ENCODE measurements at regions of chr17 and their contacts with region 1.

Region 1: DNA sequence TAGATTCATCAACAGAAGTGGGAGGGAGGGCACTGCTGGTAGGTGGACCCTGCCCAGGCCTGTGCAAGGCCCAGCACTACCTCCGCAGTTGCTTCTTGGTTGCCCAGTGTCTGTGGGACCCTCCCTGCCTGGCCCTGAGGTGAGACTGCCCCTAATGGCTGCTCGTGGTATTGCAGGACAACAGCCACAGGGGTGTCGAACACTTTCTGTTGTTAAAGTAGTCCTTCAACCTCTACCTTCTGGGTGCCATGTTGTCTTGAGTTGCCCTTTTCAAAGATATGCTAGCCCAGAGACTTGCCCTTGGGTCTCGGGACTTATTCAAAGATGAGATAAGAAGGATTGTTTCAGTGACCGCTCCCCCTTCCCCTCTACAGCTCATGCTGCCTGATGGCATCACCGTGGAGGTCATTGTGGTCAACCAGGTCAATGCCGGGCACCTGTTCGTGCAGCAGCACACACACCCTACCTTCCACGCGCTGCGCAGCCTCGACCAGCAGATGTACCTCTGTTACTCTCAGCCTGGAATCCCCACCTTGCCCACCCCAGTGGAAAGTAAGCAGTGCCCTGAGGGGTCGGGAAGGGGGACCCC is 29.1 kb downstream of the AKAP1 start:
- DNase-seq: peak; percentile 69 to 77
- H3K4me3 ChIP-seq: no peak overlapping the region
- H3K4me3 Mint-ChIP-seq: no peak overlapping the region
- H3K27ac Mint-ChIP-seq: no peak overlapping the region
- H3K4me1 ChIP-seq: no peaks in the 10 kb centered on the region
- H3K4me1 Mint-ChIP-seq: no peaks in the 10 kb centered on the region
- H3K27me3 ChIP-seq: no peaks in the 10 kb centered on the region
- H3K27me3 Mint-ChIP-seq: no peaks in the 10 kb centered on the region
- CTCF ChIP-seq: peak; percentile 82 to 94

Region 2: DNA sequence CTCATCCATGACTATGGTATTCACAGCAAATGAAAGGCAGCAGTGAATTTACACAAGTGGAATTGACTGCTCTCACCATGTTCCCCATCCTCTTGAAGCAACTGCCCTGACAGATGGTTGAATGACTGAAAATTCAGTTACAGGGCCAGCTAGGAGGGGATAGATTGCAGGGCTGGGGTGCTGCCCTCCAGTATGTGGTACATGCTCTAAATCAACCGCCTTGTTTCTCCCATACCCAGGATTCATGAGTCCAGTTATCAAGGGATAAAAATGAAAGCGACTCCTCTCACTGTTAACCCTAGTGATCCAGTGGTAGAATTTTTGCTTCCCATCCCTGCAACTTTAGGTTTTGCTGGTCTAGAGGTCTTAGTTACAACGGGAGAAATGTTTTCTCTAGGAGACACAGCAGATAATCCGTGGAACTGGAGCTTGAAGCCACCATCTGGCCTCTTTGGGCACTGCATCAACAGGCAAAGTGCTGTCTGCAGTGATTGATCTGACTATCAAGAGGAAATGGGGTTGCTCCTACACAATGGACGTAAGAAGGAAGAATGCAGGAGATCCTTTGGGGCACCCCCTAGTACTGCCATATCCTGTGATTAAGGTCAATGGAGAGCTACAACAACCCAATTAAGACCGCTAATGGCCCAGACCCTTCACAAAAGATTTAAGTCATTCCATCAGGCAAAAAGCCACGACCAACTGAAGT is 104.3 kb before region 1 on chr17:
- CTCF ChIA-PET with region 1: no interaction called
- POLR2A ChIA-PET with region 1: no interaction called
- intact Hi-C with region 1: loop called (anchors 10 kb)
- DNase-seq: peak; percentile 65 to 69
- H3K4me3 ChIP-seq: no peak overlapping the region
- H3K4me3 Mint-ChIP-seq: no peak overlapping the region
- H3K27ac Mint-ChIP-seq: no peak overlapping the region
- H3K4me1 ChIP-seq: no peaks in the 10 kb centered on the region
- H3K4me1 Mint-ChIP-seq: peaks cover 7% of the 10 kb centered on the region
- H3K27me3 ChIP-seq: no peaks in the 10 kb centered on the region
- H3K27me3 Mint-ChIP-seq: no peaks in the 10 kb centered on the region
- CTCF ChIP-seq: peak; percentile 77 to 86

Region 3: DNA sequence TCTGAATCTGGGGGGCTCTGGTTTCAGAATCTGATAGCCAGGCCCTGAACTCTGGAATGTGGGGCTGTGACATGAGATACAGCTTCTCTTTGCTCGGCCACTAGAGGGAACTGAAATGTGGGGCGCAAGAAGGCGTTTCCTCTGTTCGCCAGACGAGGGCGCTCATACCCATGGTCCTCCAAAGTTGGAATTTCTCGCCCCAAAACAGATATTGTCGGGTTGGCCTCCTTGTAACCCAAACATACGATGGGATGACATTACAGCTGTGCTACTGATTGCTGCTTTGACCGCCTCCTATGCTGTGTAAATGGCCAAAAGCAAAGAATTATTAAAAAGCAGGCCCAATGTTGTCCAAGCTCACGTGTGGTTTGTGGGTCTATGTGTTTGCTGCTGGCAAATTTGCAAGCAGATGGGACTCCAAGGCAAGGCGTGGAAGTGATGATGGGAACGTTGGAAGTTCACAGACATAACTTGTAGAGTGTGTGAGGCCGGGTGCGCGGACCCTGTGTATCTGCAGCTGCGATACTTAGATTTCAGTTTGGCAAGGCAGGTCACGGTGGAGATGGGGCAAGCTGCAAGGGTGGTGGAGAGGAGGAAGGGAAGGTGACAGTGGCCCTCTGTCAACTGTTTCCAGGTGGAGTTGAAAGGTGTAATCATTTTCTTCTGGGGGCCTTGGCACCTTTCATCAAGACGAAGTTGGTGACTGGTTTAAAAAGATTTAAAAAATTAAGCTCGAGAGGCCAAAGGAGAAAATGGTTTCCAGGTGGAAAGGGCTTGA is 129.2 kb after region 1 on chr17:
- CTCF ChIA-PET with region 1: no interaction called
- POLR2A ChIA-PET with region 1: no interaction called
- intact Hi-C with region 1: no loop called
- DNase-seq: peak; percentile 65 to 79
- H3K4me3 ChIP-seq: no peak overlapping the region
- H3K4me3 Mint-ChIP-seq: no peak overlapping the region
- H3K27ac Mint-ChIP-seq: no peak overlapping the region
- H3K4me1 ChIP-seq: no peaks in the 10 kb centered on the region
- H3K4me1 Mint-ChIP-seq: peaks cover 11% of the 10 kb centered on the region
- H3K27me3 ChIP-seq: no peaks in the 10 kb centered on the region
- H3K27me3 Mint-ChIP-seq: no peaks in the 10 kb centered on the region
- CTCF ChIP-seq: peak; percentile 99 to 100